Activated CD4-positive, alpha-beta T cell treated with anti-CD3 and anti-CD28 coated beads, Interleukin-2, amount 10 ng/mL, durations not matched to agents 24 days and 14 days (primary cell): ENCODE measurements at regions of chr4 and their contacts with region 1.

Region 1: GRCh38 chr4:109815151-109816081 is at the start of gene GAR1:
- DNase-seq: peak; percentile 97
- H3K4me3 Mint-ChIP-seq: peak within 1 kb of the TSS; percentile 95
- H3K27ac Mint-ChIP-seq: peak within 1 kb of the TSS; percentile 98
- H3K4me1 Mint-ChIP-seq: peaks cover 37% of the 10 kb centered on the region
- H3K27me3 Mint-ChIP-seq: no peaks in the 10 kb centered on the region
- total RNA-seq, gene GAR1: 59.1 and 61.8 TPM in 2 replicates

Region 2: GRCh38 chr4:107989537-107990386 is 1825.7 kb before region 1 on chr4 and contains the start of gene HADH:
- intact Hi-C with region 1: loop called (anchors 5 kb)
- DNase-seq: peak; percentile 99
- H3K4me3 Mint-ChIP-seq: peak within 1 kb of the TSS; percentile 92
- H3K27ac Mint-ChIP-seq: peak within 1 kb of the TSS; percentile 95
- H3K4me1 Mint-ChIP-seq: peaks cover 32% of the 10 kb centered on the region
- H3K27me3 Mint-ChIP-seq: no peaks in the 10 kb centered on the region
- total RNA-seq, gene HADH: 37.2 and 41.4 TPM in 2 replicates

Region 3: DNA sequence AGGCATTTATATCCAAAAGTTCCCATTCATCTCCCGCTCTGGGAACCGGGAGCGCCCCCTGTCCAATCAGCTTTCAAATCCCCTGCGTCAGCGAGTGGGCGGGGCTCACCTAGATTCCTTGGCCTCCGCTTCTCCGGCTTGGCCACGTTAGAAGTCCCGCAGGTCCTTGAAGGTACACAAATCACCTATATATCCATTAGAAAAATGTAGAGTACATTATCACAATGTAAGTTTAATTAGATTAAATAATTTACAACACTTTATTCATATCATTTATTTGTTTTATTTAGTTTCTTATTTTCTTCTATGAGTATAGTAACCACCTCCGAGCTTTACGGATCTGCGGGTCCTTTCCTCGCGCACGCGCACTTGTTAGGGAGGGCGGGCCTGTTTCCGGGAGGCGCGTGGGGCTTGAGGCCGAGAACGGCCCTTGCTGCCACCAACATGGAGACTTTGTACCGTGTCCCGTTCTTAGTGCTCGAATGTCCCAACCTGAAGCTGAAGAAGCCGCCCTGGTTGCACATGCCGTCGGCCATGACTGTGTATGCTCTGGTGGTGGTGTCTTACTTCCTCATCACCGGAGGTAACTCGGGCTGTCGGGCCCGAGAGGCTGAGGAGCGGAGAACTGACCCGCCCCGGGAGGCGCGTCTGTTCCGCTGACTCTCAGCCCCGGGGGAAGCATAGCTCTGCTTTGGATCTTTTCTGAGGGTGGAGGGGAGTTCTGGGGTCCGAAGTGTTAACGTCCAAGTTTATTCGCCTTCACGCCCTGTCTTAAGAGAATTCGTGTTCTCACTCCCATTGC is 1165.0 kb before region 1 on chr4 and contains the start of gene OSTC:
- intact Hi-C with region 1: loop called (anchors 10 kb)
- DNase-seq: peak; percentile 98
- H3K4me3 Mint-ChIP-seq: peak within 1 kb of the TSS; percentile 95
- H3K27ac Mint-ChIP-seq: peak within 1 kb of the TSS; percentile 86
- H3K4me1 Mint-ChIP-seq: peaks cover 21% of the 10 kb centered on the region
- H3K27me3 Mint-ChIP-seq: no peaks in the 10 kb centered on the region
- total RNA-seq, gene OSTC: 91.2 and 93.3 TPM in 2 replicates

Region 4: DNA sequence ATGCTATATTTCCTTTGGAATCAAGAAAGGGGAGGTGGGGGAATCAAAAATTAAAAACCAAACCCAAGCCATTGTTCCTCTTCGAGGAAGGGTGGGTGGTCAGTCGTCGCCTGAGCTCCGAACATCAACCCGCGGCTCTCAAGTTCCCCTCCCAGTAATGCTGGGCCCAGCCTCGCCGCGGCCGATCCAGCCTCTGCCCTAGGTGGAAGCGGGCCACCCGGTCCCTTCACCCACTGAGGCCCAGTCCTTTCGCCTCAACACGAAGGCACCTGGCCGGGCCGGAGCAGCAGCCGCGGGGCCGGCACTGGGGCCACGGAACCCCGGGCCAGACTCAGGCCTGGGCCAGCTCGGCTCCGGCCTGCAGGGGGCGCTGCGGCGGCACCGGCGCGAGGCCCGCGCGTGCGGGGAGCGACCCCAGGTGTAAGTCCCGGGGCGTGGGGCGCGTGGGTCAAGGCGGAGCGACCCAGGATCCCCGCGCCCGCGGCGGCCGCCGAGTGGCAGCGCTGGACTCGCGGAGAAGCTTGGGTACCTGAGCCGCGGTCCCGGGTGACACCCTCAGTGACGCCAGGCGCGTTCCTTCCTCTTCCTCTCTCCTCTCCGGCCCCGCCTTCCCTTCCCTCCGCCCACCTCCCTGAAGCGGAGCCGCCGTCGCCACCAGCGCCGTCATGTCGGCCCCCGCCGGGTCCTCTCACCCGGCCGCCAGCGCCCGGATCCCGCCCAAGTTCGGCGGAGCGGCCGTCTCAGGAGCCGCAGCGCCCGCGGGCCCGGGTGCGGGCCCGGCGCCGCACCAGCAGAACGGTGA is 382.0 kb before region 1 on chr4 and contains the start of gene SEC24B:
- intact Hi-C with region 1: loop called (anchors 1 kb)
- DNase-seq: peak; percentile 97
- H3K4me3 Mint-ChIP-seq: peak within 1 kb of the TSS; percentile 90
- H3K27ac Mint-ChIP-seq: peak within 1 kb of the TSS; percentile 85
- H3K4me1 Mint-ChIP-seq: peaks cover 50% of the 10 kb centered on the region
- H3K27me3 Mint-ChIP-seq: no peaks in the 10 kb centered on the region
- total RNA-seq, gene SEC24B: 32.5 and 33.6 TPM in 2 replicates

Region 5: DNA sequence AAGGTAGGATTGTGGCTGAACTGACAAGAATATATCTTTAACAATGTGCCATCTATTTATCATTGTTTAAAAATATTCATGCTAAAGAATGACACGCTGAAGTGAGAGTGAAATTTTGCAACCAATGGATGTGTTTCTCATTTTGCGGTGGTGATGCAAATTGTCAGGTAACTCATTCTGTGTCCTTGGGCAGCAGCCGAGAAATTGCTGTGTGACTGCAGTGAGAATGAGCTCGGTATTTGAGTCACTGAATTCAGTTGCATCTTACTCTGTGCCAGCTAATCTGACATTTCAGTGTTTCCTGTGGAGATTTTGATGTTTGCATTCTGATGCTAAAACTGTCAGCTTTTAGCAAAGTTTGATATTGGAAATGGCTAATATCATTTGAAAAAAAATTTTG is 227.2 kb before region 1 on chr4:
- intact Hi-C with region 1: no loop called
- DNase-seq: peak; percentile 73
- H3K4me3 Mint-ChIP-seq: peak overlapping the region; percentile 4
- H3K27ac Mint-ChIP-seq: peak overlapping the region; percentile 6
- H3K4me1 Mint-ChIP-seq: peaks cover 54% of the 10 kb centered on the region
- H3K27me3 Mint-ChIP-seq: no peaks in the 10 kb centered on the region

Region 6: GRCh38 chr4:109648266-109648996 is 167.0 kb before region 1 on chr4:
- intact Hi-C with region 1: loop called (anchors 2 kb)
- DNase-seq: peak; percentile 75
- H3K4me3 Mint-ChIP-seq: peak overlapping the region; percentile 73
- H3K27ac Mint-ChIP-seq: peak overlapping the region; percentile 86
- H3K4me1 Mint-ChIP-seq: peaks cover 38% of the 10 kb centered on the region
- H3K27me3 Mint-ChIP-seq: no peaks in the 10 kb centered on the region

Region 7: GRCh38 chr4:109729718-109730618 is 85.4 kb before region 1 on chr4 and contains the start of gene PLA2G12A:
- intact Hi-C with region 1: loop called (anchors 1 kb)
- DNase-seq: peak; percentile 92
- H3K4me3 Mint-ChIP-seq: peak within 1 kb of the TSS; percentile 91
- H3K27ac Mint-ChIP-seq: peak within 1 kb of the TSS; percentile 78
- H3K4me1 Mint-ChIP-seq: peaks cover 16% of the 10 kb centered on the region
- H3K27me3 Mint-ChIP-seq: peaks cover 6% of the 10 kb centered on the region
- total RNA-seq, gene PLA2G12A: 9.0 and 11.4 TPM in 2 replicates

Region 8: GRCh38 chr4:109877400-109877799 is 62.0 kb after region 1 on chr4:
- intact Hi-C with region 1: no loop called
- DNase-seq: no peak
- H3K4me3 Mint-ChIP-seq: no peak overlapping the region
- H3K27ac Mint-ChIP-seq: no peak overlapping the region
- H3K4me1 Mint-ChIP-seq: no peaks in the 10 kb centered on the region
- H3K27me3 Mint-ChIP-seq: peaks cover 8% of the 10 kb centered on the region

Region 9: DNA sequence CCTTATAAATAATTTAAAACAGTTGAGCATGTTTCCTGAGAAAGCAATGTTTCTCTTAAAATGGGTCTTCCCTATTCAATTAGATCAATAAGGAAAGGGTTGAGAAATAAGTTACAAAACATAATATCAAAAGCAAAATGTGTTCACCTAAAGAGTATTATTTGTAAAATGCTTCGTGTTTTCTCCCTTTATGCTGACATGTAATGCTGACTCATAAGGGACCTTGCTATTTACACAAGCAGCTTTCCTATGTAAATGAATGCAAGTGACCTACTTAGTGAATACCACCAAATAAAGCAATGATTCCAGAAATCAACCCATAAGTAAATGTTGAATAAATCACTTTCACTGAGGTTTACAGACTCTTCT is 291.5 kb after region 1 on chr4:
- intact Hi-C with region 1: no loop called
- DNase-seq: no peak
- H3K4me3 Mint-ChIP-seq: no peak overlapping the region
- H3K27ac Mint-ChIP-seq: no peak overlapping the region
- H3K4me1 Mint-ChIP-seq: peaks cover 13% of the 10 kb centered on the region
- H3K27me3 Mint-ChIP-seq: no peaks in the 10 kb centered on the region

Region 10: DNA sequence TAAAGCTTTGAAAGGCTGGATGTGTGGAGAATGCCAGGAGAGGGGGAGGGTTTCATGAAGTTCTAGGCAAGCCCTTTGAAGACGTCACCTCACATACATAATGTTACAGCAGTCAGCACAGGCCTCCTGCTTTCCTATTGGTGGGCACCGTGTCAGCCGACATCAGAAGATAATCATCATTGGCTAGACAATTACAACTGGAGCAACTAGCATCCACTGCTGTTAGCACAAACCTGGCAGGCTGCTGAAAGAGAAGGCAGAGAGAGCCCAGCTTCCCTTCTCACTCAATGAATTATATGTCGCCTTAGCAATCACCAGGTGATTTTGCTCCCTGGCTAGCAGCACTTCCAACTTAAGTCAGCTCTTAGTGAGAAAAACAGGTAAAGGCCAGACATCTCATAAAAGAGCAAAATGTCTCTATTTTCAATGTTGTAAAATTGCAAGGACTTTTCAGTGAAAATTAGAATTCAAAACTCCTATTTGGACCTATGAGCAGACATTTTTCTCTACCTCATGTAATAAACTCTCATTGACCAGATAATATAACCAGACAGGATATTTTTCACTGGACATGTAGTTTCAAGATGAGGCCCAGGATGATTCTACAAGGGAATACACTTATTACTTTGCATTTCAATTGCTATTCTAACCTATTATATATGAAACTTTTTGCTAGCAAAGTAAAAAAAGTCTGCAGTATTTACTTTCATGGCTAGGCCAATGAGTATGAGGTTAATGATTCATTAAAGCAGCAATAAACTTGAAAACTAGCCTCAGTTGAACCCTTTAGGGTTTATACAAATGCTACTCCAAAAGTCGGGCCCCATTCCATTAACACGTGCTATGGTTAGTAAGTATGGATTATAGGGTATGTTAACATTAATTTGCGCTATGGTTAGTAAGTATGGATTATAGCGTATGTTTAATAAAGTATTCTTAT is 378.7 kb after region 1 on chr4:
- intact Hi-C with region 1: loop called (anchors 2 kb)
- DNase-seq: peak; percentile 94
- H3K4me3 Mint-ChIP-seq: peak overlapping the region; percentile 62
- H3K27ac Mint-ChIP-seq: peak overlapping the region; percentile 87
- H3K4me1 Mint-ChIP-seq: peaks cover 34% of the 10 kb centered on the region
- H3K27me3 Mint-ChIP-seq: no peaks in the 10 kb centered on the region